ENCODE measurements at regions of chr11 and their contacts with region 1.

Region 1: GRCh38 chr11:10314199-10315072 is 9.6 kb downstream of the ADM start:
- DNase-seq: no peak
- ATAC-seq: peak; percentile 90
- H3K4me3 ChIP-seq: no peak overlapping the region
- H3K27ac ChIP-seq: no peak overlapping the region
- H3K4me1 ChIP-seq: peaks cover 10% of the 10 kb centered on the region
- H3K27me3 ChIP-seq: no peaks in the 10 kb centered on the region
- CTCF ChIP-seq: no peak

Region 2: GRCh38 chr11:9972989-9973388 is 341.4 kb before region 1 on chr11:
- intact Hi-C with region 1: loop called (anchors 10 kb)
- DNase-seq: no peak
- ATAC-seq: peak; percentile 70
- H3K4me3 ChIP-seq: no peak overlapping the region
- H3K27ac ChIP-seq: no peak overlapping the region
- H3K4me1 ChIP-seq: no peaks in the 10 kb centered on the region
- H3K27me3 ChIP-seq: no peaks in the 10 kb centered on the region
- CTCF ChIP-seq: peak; percentile 72

Region 3: GRCh38 chr11:10192036-10192435 is 122.4 kb before region 1 on chr11:
- intact Hi-C with region 1: no loop called
- DNase-seq: no peak
- ATAC-seq: no peak
- H3K4me3 ChIP-seq: no peak overlapping the region
- H3K27ac ChIP-seq: no peak overlapping the region
- H3K4me1 ChIP-seq: no peaks in the 10 kb centered on the region
- H3K27me3 ChIP-seq: no peaks in the 10 kb centered on the region
- CTCF ChIP-seq: no peak

Region 4: DNA sequence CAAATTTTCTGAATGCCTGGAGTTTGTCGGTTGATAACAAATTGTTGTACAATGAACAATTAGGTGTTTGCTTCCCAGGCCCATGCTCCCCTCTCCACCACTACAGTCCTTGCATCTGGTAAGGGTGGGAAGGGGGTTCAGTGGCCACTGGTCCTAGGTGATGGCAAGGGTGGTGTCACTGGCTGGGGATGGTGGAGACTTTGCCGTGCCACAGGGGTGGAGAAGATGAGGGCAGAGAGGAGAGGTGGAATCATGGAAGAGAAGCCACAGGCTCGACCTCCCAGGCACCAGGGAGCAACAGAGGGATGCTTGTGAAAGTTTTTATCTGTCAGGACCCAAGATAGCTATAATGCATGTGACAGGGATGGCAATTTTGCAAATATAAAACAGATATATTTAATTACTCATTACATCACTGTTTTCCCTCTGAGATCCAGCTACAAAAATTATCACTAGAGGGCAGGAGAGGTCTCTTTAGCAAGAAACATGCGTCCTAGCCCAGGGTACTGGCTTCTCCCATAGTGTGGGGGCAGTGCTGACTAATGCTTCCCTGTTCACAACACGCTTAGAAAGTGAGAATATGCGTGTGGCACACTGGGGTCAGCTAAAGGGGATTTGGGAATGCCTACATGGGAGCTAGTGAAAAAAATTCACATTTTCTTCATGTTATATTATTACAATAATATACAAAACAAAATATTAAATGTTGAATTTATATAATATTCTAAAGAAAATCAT is 91.6 kb after region 1 on chr11:
- intact Hi-C with region 1: no loop called
- DNase-seq: no peak
- ATAC-seq: peak; percentile 94
- H3K4me3 ChIP-seq: no peak overlapping the region
- H3K27ac ChIP-seq: no peak overlapping the region
- H3K4me1 ChIP-seq: peaks cover 17% of the 10 kb centered on the region
- H3K27me3 ChIP-seq: no peaks in the 10 kb centered on the region
- CTCF ChIP-seq: peak; percentile 72